ENCODE measurements at regions of chr1 and their contacts with region 1.

Region 1: GRCh38 chr1:33036526-33037503 is at the start of gene AK2:
- DNase-seq: peak; percentile 98
- H3K4me3 Mint-ChIP-seq: peak within 1 kb of the TSS; percentile 90
- H3K27ac Mint-ChIP-seq: peak within 1 kb of the TSS; percentile 94
- H3K4me1 Mint-ChIP-seq: peaks cover 45% of the 10 kb centered on the region
- H3K27me3 Mint-ChIP-seq: no peaks in the 10 kb centered on the region
- total RNA-seq, gene AK2: 424 and 429 TPM in 2 replicates

Region 2: DNA sequence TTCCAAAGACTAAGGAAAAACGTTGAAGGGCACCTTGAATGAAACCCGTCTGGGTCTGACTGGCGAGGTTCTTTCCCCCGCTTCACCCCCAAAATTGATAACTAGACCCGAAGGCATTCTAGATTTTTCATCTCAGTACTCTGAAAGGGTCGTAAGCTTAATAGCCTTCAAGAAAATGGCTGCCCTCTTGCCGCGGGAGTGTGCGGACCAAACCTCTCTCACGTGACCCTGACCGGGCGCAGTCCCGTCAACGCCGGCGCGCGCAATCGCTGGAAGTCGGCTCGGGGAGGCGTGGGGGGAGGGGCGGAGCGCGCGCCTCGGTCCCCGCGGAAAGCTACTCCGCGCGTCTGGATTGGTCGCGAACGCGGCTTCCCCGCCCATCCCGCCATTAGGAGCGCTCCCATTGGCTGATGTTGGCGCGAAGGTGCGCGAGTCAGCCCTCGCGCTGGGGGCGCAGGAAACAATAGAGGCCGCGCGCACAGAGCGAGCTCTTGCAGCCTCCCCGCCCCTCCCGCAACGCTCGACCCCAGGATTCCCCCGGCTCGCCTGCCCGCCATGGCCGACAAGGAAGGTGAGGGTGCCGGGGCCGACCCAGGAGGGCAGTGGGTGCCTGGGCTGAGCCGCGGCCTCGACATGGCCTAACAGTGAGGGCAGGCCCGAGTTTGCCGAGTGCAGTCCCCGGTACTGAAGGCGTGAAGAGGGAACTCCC is 385.9 kb before region 1 on chr1 and contains the start of gene RBBP4:
- intact Hi-C with region 1: loop called (anchors 1 kb)
- DNase-seq: peak; percentile 100
- H3K4me3 Mint-ChIP-seq: peak within 1 kb of the TSS; percentile 99
- H3K27ac Mint-ChIP-seq: peak within 1 kb of the TSS; percentile 100
- H3K4me1 Mint-ChIP-seq: peaks cover 37% of the 10 kb centered on the region
- H3K27me3 Mint-ChIP-seq: no peaks in the 10 kb centered on the region
- total RNA-seq, gene RBBP4: 329 and 331 TPM in 2 replicates

Region 3: GRCh38 chr1:32964461-32965250 is 72.2 kb before region 1 on chr1 and contains the start of gene RNF19B:
- intact Hi-C with region 1: loop called (anchors 1 kb)
- DNase-seq: peak; percentile 99
- H3K4me3 Mint-ChIP-seq: peak within 1 kb of the TSS; percentile 87
- H3K27ac Mint-ChIP-seq: peak within 1 kb of the TSS; percentile 87
- H3K4me1 Mint-ChIP-seq: peaks cover 57% of the 10 kb centered on the region
- H3K27me3 Mint-ChIP-seq: no peaks in the 10 kb centered on the region
- total RNA-seq, gene RNF19B: 44.5 and 46.8 TPM in 2 replicates

Region 4: DNA sequence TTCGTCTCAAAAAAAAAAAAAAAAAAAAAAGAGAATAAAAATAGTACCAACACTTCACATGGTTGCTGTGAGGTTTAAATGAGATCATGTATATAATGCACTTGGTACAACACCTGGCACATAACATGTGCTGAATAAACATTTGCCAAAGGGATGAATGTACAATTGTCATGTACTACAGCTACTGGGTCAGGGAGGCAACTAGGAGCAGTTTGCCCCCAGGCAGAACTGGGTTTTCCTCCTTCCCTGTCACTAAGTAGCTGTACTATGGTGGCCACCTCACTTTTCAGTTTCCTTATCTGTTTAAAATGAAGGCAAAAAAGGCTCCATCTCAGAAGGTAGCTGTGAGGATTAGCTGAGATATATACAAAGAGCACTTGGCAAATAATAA is 11.6 kb before region 1 on chr1:
- intact Hi-C with region 1: loop called (anchors 1 kb)
- DNase-seq: no peak
- H3K4me3 Mint-ChIP-seq: no peak overlapping the region
- H3K27ac Mint-ChIP-seq: peak overlapping the region; percentile 85
- H3K4me1 Mint-ChIP-seq: peaks cover 43% of the 10 kb centered on the region
- H3K27me3 Mint-ChIP-seq: no peaks in the 10 kb centered on the region

Region 5: GRCh38 chr1:33127001-33127791 is 90.4 kb after region 1 on chr1:
- intact Hi-C with region 1: loop called (anchors 2 kb)
- DNase-seq: peak; percentile 100
- H3K4me3 Mint-ChIP-seq: peak overlapping the region; percentile 95
- H3K27ac Mint-ChIP-seq: peak overlapping the region; percentile 97
- H3K4me1 Mint-ChIP-seq: peaks cover 39% of the 10 kb centered on the region
- H3K27me3 Mint-ChIP-seq: no peaks in the 10 kb centered on the region